Stomach (tissue), 19 donors: ENCODE measurements at regions of chr9 and their contacts with region 1.

Region 1: GRCh38 chr9:137605121-137606004 is at the start of gene ARRDC1:
- DNase-seq: peak; percentile 96 to 97
- H3K4me3 ChIP-seq: peak within 1 kb of the TSS; percentile 62 to 90 (median 82)
- H3K27ac ChIP-seq: peak within 1 kb of the TSS; percentile 87 to 99 (median 91)
- H3K4me1 ChIP-seq: peaks cover 36 to 52% (median 45%) of the 10 kb centered on the region in 4 donors
- H3K27me3 ChIP-seq: no peaks in the 10 kb centered on the region
- CTCF ChIP-seq: peak in 1 of 7 experiments; percentile 8
- EP300 ChIP-seq: no peak
- POLR2A ChIP-seq: peak in 1 of 4 donors; percentile 31
- total RNA-seq, gene ARRDC1: 31.8 to 185 (median 148) TPM

Region 2: DNA sequence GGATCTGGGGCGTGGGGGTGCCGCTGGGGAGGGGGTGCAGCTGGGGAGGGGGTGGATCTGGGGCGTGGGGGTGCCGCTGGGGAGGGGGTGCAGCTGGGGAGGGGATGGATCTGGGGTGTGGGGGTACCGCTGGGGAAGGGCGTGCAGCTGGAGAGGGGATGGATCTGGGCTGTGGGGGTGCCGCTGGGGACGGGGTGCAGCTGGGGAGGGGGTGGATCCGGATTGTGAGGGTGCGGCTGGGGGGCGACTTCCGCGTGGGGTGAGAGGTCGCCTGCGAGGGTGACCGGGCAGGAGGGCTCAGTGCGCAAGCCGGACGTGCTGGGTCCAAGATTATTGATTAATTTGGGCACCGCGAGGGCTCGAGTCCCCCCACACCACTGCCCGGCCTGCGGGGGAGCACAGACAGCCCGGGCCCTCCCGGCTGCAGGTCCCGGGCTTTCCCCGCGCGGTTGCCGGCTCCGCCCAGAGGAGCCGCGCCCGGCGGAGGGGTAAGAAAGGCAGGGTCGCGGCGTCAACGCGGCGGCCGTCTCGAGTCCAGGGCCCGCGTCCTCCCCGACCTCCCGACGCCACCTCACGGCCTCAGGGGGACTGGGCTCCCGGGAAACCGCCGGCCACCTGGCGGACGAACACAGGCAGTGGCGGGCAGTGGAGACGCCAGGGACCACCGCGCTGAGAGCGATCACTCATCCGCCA is 54.3 kb before region 1 on chr9:
- intact Hi-C with region 1: no loop called
- DNase-seq: no peak
- H3K4me3 ChIP-seq: peak overlapping the region; percentile 62 to 95 (median 77)
- H3K27ac ChIP-seq: peak overlapping the region; percentile 87 to 96 (median 93)
- H3K4me1 ChIP-seq: peaks cover 18 to 53% (median 52%) of the 10 kb centered on the region in 4 donors
- H3K27me3 ChIP-seq: no peaks in the 10 kb centered on the region
- CTCF ChIP-seq: peak in 4 of 7 experiments; percentile 28 to 41 (median 34)
- EP300 ChIP-seq: no peak
- POLR2A ChIP-seq: no peak

Region 3: GRCh38 chr9:137665697-137666510 is 60.5 kb after region 1 on chr9:
- intact Hi-C with region 1: loop called (anchors 10 kb)
- DNase-seq: peak in 1 of 2 donors; percentile 60
- H3K4me3 ChIP-seq: no peak overlapping the region
- H3K27ac ChIP-seq: peak overlapping the region in 3 of 5 donors; percentile 12 to 15 (median 12)
- H3K4me1 ChIP-seq: peaks cover 47 to 75% (median 55%) of the 10 kb centered on the region in 4 donors
- H3K27me3 ChIP-seq: no peaks in the 10 kb centered on the region
- CTCF ChIP-seq: no peak
- EP300 ChIP-seq: no peak
- POLR2A ChIP-seq: no peak